ENCODE measurements at regions of chr12 and their contacts with region 1.

Region 1: DNA sequence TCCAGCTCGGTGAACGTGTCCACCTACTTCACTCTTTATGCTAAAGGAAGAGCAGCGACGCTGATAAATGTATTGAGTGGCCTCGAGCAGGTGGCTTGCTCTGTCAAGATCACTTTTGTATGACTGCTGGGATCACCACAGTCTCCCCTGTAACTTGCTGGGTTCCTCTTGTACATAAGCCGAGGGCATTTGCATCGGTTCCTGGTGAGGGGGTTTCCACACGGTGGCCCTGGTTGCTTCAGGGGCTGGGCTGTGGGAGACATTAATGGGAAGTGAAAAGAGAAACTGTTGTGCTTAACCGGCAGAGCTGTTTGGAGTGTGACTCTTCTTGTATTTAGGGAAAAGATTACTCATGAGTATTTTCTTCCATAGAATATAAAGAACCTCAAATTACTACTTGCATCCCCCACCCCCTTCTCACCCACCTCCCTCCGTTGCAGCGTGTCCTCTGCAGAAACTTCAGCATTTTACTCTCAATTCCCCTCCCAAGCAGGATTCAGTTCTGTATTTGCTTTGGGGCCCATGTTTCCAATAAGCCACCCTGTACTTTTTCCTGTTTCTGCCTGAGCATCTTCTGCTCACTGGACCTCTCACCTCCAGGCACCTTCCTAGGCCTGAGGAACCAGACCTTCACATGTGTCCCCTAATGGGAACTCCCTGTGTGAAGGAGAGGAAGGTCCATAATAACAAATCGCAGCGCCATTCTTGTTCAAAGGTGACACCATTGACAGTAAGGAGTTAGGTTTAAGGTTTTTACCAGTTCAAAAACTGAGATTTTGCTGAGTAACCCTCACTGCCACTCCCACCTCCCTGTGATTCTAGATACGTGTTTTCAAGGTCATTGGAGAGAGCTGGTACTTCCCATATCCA is 187.0 kb downstream of the ETV6 start:
- DNase-seq: peak; percentile 92
- H3K4me3 Mint-ChIP-seq: no peak overlapping the region
- H3K27ac Mint-ChIP-seq: peak overlapping the region; percentile 97
- H3K4me1 Mint-ChIP-seq: peaks cover 68% of the 10 kb centered on the region
- H3K27me3 Mint-ChIP-seq: no peaks in the 10 kb centered on the region

Region 2: DNA sequence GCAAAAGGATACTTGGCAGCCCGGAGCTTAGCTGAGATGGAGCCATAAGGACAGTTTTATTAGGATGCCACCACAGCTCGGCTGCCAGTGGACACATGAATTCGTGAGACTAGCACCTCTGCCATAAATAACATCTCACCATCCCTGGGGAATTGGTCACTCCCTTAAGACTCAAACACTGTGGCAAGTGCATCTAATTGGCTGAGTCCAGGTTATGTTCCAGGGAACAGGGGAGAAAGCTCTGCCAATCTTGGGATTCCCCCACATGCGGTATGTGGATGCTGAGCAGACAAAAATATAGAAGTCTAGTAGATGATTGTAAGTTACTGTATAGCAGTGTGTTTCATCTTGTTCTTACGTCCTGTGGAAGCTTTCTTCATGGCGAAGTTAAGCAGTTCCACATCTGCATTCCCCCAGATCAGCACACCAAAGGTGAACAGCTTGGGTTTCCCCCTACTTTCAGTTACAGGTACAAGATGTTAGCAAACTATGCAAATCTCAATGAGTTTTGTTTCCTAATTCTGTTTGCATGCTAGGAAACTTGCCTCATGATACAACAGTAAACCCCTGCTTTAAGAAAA is 55.9 kb before region 1 on chr12:
- CTCF ChIA-PET with region 1: interaction called, 6 read pairs
- intact Hi-C with region 1: loop called (anchors 1 kb)
- DNase-seq: peak; percentile 68
- H3K4me3 Mint-ChIP-seq: peak overlapping the region; percentile 2
- H3K27ac Mint-ChIP-seq: peak overlapping the region; percentile 85
- H3K4me1 Mint-ChIP-seq: peaks cover 74% of the 10 kb centered on the region
- H3K27me3 Mint-ChIP-seq: no peaks in the 10 kb centered on the region

Region 3: GRCh38 chr12:11868027-11868426 is 31.5 kb after region 1 on chr12:
- CTCF ChIA-PET with region 1: no interaction called
- intact Hi-C with region 1: loop called (anchors 1 kb)
- DNase-seq: peak; percentile 32
- H3K4me3 Mint-ChIP-seq: no peak overlapping the region
- H3K27ac Mint-ChIP-seq: peak overlapping the region; percentile 55
- H3K4me1 Mint-ChIP-seq: peaks cover 21% of the 10 kb centered on the region
- H3K27me3 Mint-ChIP-seq: no peaks in the 10 kb centered on the region

Region 4: DNA sequence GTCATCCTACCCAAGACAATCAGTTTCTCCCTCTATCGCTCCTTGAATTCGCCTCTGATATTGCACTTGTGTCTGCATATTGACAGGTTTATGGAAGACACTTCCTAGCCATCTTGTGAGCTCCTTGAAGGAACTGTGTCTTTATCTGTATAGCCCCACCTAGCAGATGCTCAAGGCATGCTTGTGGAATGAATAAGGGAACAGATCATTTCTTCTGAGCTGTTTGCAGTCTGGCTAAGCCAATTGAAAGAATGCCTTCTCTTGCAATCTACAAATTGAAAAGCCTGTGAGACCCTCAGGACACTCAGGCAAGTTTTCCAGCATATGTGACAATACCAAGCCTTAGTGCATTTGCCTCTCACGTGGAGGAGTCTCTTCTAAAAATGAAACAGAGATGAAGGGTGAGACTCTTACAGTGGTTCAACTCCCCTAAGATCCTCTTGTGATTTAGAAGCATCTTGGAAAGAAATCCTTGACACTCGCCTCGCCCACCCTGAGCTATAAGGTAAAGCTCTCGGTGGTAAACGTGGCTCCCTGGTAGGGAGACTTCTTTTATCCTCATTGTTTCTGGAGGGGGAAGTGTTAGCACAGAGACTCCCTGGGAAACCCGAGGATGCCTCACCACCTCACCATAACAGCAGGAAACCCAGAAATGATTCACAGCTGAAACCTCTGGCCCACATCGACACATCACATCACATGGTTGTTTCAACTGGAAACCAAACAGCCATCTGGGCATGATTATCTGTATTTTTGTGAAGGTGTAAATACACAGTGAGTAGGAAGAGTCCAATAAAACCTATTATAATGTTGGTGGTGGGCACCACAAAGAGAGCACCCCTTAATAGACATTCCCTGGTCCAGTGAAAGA is 121.9 kb after region 1 on chr12:
- CTCF ChIA-PET with region 1: no interaction called
- intact Hi-C with region 1: loop called (anchors 1 kb)
- DNase-seq: peak; percentile 84
- H3K4me3 Mint-ChIP-seq: peak overlapping the region; percentile 32
- H3K27ac Mint-ChIP-seq: peak overlapping the region; percentile 73
- H3K4me1 Mint-ChIP-seq: peaks cover 32% of the 10 kb centered on the region
- H3K27me3 Mint-ChIP-seq: peaks cover 11% of the 10 kb centered on the region

Region 5: GRCh38 chr12:12024911-12025682 is 188.6 kb after region 1 on chr12:
- CTCF ChIA-PET with region 1: no interaction called
- intact Hi-C with region 1: loop called (anchors 1 kb)
- DNase-seq: peak; percentile 79
- H3K4me3 Mint-ChIP-seq: peak overlapping the region; percentile 36
- H3K27ac Mint-ChIP-seq: peak overlapping the region; percentile 72
- H3K4me1 Mint-ChIP-seq: peaks cover 66% of the 10 kb centered on the region
- H3K27me3 Mint-ChIP-seq: no peaks in the 10 kb centered on the region